MCF 10A (cell line): ENCODE measurements at regions of chr12 and their contacts with region 1.

Region 1: DNA sequence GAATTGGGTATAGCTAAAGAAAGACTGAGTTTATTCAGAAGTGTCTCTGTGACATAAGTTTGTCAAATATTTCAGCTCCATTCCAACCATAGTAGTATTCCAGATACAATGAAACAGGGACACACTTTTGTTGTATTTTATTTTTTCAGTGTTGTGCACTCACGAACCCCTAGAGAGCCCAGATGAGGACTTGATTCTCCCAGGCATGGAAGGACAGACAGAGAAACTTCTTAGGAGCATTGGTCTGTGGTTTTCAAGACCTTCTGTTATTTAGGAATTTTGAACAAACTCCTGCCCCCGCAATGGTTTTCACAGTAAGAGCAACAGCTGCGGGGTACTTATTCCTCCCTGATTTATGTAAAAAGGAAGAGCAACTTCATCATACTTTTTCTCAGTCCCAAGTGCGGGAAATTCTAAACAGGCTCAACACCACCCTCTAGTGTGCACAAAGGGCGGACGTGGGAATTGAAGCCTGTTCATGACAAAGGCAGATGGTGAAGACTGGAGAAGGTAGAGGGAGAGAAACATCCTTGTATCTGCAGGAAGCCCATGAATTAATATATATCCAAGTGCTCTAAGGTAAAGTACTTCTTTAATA is 147.6 kb downstream of the PAH start:
- DNase-seq: peak; percentile 71
- H3K4me3 Mint-ChIP-seq: no peak overlapping the region
- H3K27ac Mint-ChIP-seq: no peak overlapping the region
- H3K4me1 Mint-ChIP-seq: no peaks in the 10 kb centered on the region
- H3K27me3 Mint-ChIP-seq: no peaks in the 10 kb centered on the region
- CTCF ChIP-seq: peak; percentile 54

Region 2: DNA sequence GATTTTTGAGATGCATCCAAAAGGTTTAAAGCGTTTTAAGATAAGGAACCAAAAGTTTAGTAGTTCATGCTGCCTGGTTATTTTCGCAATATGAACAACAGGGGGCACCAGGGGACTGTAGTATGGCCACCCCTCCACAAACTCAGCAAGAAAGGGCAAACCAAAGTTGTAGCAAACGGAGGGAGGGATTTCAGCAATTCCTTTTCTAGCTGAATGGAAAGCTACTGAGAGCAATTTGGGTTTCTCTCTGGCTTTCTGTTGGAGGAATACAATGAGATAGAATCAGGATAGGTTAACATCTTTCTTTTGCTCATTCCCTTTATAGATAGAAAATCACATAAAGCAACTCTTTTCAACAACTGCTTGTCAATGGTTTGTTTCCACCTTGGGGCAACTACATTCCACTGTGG is 829.6 kb before region 1 on chr12:
- CTCF ChIA-PET with region 1: interaction called, 5 read pairs
- POLR2A ChIA-PET with region 1: no interaction called
- intact Hi-C with region 1: loop called (anchors 1 kb)
- DNase-seq: peak; percentile 81
- H3K4me3 Mint-ChIP-seq: no peak overlapping the region
- H3K27ac Mint-ChIP-seq: no peak overlapping the region
- H3K4me1 Mint-ChIP-seq: peaks cover 23% of the 10 kb centered on the region
- H3K27me3 Mint-ChIP-seq: no peaks in the 10 kb centered on the region
- CTCF ChIP-seq: peak; percentile 77

Region 3: GRCh38 chr12:102169922-102170621 is 599.3 kb before region 1 on chr12:
- CTCF ChIA-PET with region 1: interaction called, 13 read pairs
- POLR2A ChIA-PET with region 1: no interaction called
- intact Hi-C with region 1: no loop called
- DNase-seq: peak; percentile 44
- H3K4me3 Mint-ChIP-seq: no peak overlapping the region
- H3K27ac Mint-ChIP-seq: peak overlapping the region; percentile 13
- H3K4me1 Mint-ChIP-seq: no peaks in the 10 kb centered on the region
- H3K27me3 Mint-ChIP-seq: no peaks in the 10 kb centered on the region
- CTCF ChIP-seq: peak; percentile 66

Region 4: GRCh38 chr12:102567031-102567985 is 202.1 kb before region 1 on chr12:
- CTCF ChIA-PET with region 1: no interaction called
- POLR2A ChIA-PET with region 1: no interaction called
- intact Hi-C with region 1: no loop called
- DNase-seq: peak; percentile 22
- H3K4me3 Mint-ChIP-seq: no peak overlapping the region
- H3K27ac Mint-ChIP-seq: peak overlapping the region; percentile 2
- H3K4me1 Mint-ChIP-seq: peaks cover 16% of the 10 kb centered on the region
- H3K27me3 Mint-ChIP-seq: no peaks in the 10 kb centered on the region
- CTCF ChIP-seq: no peak

Region 5: DNA sequence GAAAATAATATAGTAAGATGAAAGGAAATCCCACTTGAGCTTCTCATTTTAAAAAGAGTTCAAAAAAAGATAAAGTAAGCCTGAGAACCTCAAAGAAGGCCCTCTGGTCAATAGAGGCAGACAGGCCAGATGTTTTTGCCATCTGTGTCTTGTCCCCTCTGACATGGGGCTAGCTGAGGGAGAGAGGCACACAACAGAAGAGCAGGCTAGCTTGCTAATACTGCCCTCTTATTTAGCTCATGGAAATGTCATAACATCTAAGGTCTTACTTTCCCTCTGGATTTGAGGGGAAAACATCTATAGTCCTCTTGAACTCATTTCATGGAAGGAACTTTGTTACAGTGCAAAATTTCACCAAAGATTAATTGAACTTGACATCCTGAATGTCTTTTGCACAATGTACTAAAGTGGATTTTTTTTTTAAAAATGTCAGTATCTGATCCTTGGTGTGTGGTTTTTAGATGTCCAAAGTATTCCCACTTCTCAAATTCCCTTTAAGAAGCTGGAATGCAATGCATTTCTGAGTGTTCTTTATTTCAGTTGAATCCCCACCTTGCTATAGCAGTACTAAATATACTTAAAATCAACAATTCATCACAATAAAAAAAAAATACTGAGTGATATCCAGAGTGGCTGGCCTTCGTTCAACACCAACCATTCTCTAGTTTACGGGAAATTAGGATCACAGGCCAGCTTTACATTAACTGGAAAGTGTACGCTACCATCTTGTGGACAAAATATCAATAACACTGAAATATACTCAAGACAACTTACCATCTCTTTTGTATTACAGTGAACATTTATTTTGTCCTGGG is 29.1 kb before region 1 on chr12:
- CTCF ChIA-PET with region 1: interaction called, 12 read pairs
- POLR2A ChIA-PET with region 1: no interaction called
- intact Hi-C with region 1: no loop called
- DNase-seq: peak; percentile 47
- H3K4me3 Mint-ChIP-seq: no peak overlapping the region
- H3K27ac Mint-ChIP-seq: no peak overlapping the region
- H3K4me1 Mint-ChIP-seq: no peaks in the 10 kb centered on the region
- H3K27me3 Mint-ChIP-seq: no peaks in the 10 kb centered on the region
- CTCF ChIP-seq: peak; percentile 30

Region 6: GRCh38 chr12:102757154-102757881 is 12.1 kb before region 1 on chr12:
- CTCF ChIA-PET with region 1: interaction called, 13 read pairs
- POLR2A ChIA-PET with region 1: no interaction called
- intact Hi-C with region 1: no loop called
- DNase-seq: peak; percentile 23
- H3K4me3 Mint-ChIP-seq: no peak overlapping the region
- H3K27ac Mint-ChIP-seq: peak overlapping the region; percentile 33
- H3K4me1 Mint-ChIP-seq: peaks cover 7% of the 10 kb centered on the region
- H3K27me3 Mint-ChIP-seq: no peaks in the 10 kb centered on the region
- CTCF ChIP-seq: no peak